ENCODE measurements at regions of chr7 and their contacts with region 1.

Region 1: GRCh38 chr7:52925332-52925731 is 110.1 kb upstream of the POM121L12 start:
- DNase-seq: no peak
- H3K4me3 ChIP-seq: no peak overlapping the region
- H3K27ac ChIP-seq: no peak overlapping the region
- H3K4me1 ChIP-seq: peaks cover 26% of the 10 kb centered on the region
- H3K27me3 ChIP-seq: no peaks in the 10 kb centered on the region
- CTCF ChIP-seq: no peak
- POLR2A ChIP-seq: no peak

Region 2: DNA sequence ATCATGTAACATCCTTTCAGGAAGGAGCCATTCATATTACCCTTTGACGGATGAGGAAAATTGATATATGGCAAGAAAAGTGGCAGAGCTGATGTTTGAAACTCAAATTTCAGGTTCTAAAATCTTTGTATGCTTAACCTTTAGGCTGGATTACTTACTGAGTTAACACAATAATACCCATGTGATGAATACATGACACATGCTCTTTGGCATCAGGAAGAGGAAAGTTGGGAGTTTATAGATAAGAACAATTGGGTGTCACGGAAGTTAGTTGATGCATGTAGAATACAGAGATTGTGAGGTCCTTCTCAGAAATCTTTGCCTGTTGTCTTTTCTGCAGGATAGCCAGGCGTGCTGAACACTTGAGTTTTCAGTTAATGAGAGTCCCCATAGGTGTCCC is 462.0 kb before region 1 on chr7:
- CTCF ChIA-PET with region 1: no interaction called
- POLR2A ChIA-PET with region 1: no interaction called
- dilution Hi-C with region 1: no loop called
- intact Hi-C with region 1: loop called (anchors 1 kb)
- DNase-seq: peak; percentile 80
- H3K4me3 ChIP-seq: peak overlapping the region in 1 of 3 experiments; percentile 30
- H3K27ac ChIP-seq: peak overlapping the region; percentile 13
- H3K4me1 ChIP-seq: peaks cover 17% of the 10 kb centered on the region
- H3K27me3 ChIP-seq: no peaks in the 10 kb centered on the region
- CTCF ChIP-seq: no peak
- POLR2A ChIP-seq: no peak

Region 3: DNA sequence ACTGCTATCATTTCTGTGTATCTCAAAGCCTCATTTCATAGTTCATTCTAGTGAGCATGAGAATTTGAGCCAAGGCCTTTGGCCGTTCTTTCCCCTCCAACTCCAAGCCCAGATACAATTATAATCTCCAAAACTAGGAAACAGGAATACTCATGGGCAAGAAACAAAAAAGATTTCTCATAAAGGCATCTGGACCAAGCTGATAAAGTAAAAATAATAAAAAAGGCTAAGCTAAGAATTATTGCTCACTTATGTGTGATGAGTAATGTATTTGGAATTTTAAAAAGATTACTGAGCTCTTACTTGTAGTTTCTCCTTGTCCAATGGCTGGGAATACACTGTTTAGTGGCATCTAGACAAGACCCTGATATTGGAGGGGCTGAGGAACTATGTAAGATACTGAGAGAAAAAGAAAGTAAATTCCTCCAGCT is 86.3 kb before region 1 on chr7:
- CTCF ChIA-PET with region 1: no interaction called
- POLR2A ChIA-PET with region 1: no interaction called
- dilution Hi-C with region 1: no loop called
- intact Hi-C with region 1: loop called (anchors 2 kb)
- DNase-seq: peak; percentile 94
- H3K4me3 ChIP-seq: peak overlapping the region in 1 of 3 experiments; percentile 35
- H3K27ac ChIP-seq: peak overlapping the region; percentile 93
- H3K4me1 ChIP-seq: peaks cover 20% of the 10 kb centered on the region
- H3K27me3 ChIP-seq: no peaks in the 10 kb centered on the region
- CTCF ChIP-seq: no peak
- POLR2A ChIP-seq: no peak

Region 4: GRCh38 chr7:52992479-52993162 is 67.3 kb after region 1 on chr7:
- CTCF ChIA-PET with region 1: no interaction called
- POLR2A ChIA-PET with region 1: no interaction called
- dilution Hi-C with region 1: no loop called
- intact Hi-C with region 1: no loop called
- DNase-seq: no peak
- H3K4me3 ChIP-seq: no peak overlapping the region
- H3K27ac ChIP-seq: no peak overlapping the region
- H3K4me1 ChIP-seq: no peaks in the 10 kb centered on the region
- H3K27me3 ChIP-seq: no peaks in the 10 kb centered on the region
- CTCF ChIP-seq: no peak
- POLR2A ChIP-seq: no peak

Region 5: GRCh38 chr7:53094827-53095226 is 169.5 kb after region 1 on chr7:
- CTCF ChIA-PET with region 1: no interaction called
- POLR2A ChIA-PET with region 1: no interaction called
- dilution Hi-C with region 1: no loop called
- intact Hi-C with region 1: loop called (anchors 1 kb)
- DNase-seq: peak; percentile 21
- H3K4me3 ChIP-seq: no peak overlapping the region
- H3K27ac ChIP-seq: peak overlapping the region; percentile 62
- H3K4me1 ChIP-seq: peaks cover 22% of the 10 kb centered on the region
- H3K27me3 ChIP-seq: no peaks in the 10 kb centered on the region
- CTCF ChIP-seq: no peak
- POLR2A ChIP-seq: no peak

Region 6: GRCh38 chr7:53119514-53119941 is 194.2 kb after region 1 on chr7:
- CTCF ChIA-PET with region 1: interaction called, 3 read pairs
- POLR2A ChIA-PET with region 1: no interaction called
- dilution Hi-C with region 1: no loop called
- intact Hi-C with region 1: loop called (anchors 1 kb)
- DNase-seq: peak; percentile 99
- H3K4me3 ChIP-seq: no peak overlapping the region
- H3K27ac ChIP-seq: peak overlapping the region; percentile 95
- H3K4me1 ChIP-seq: peaks cover 27% of the 10 kb centered on the region
- H3K27me3 ChIP-seq: no peaks in the 10 kb centered on the region
- CTCF ChIP-seq: no peak
- POLR2A ChIP-seq: no peak

Region 7: DNA sequence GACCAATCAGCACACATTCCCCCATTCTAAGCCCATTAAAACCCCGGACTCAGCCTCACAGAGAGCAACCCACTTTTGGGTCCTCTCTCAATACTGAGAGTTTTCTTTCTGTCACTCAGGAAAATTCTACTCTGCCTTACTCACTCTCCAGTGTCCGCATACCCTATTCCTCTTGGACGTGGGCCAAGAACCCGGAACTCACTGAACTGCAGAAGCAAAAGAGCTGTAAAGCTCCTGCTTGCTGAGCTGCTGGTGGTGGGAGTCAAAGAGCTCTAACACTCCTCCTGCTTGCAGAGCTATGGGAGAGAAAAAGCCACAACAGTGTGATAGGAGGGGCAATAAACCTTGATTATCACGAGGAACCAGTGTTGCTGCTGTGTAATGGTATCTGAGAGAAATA is 497.0 kb after region 1 on chr7:
- CTCF ChIA-PET with region 1: no interaction called
- POLR2A ChIA-PET with region 1: no interaction called
- dilution Hi-C with region 1: no loop called
- intact Hi-C with region 1: no loop called
- DNase-seq: no peak
- H3K4me3 ChIP-seq: no peak overlapping the region
- H3K27ac ChIP-seq: no peak overlapping the region
- H3K4me1 ChIP-seq: no peaks in the 10 kb centered on the region
- H3K27me3 ChIP-seq: no peaks in the 10 kb centered on the region
- CTCF ChIP-seq: no peak
- POLR2A ChIP-seq: no peak

Measured in endothelial cell of umbilical vein (primary cell).